Activated CD4-positive, alpha-beta T cell treated with anti-CD3 and anti-CD28 coated beads for 36 hours (primary cell): ENCODE measurements at regions of chr17 and their contacts with region 1.

Region 1: DNA sequence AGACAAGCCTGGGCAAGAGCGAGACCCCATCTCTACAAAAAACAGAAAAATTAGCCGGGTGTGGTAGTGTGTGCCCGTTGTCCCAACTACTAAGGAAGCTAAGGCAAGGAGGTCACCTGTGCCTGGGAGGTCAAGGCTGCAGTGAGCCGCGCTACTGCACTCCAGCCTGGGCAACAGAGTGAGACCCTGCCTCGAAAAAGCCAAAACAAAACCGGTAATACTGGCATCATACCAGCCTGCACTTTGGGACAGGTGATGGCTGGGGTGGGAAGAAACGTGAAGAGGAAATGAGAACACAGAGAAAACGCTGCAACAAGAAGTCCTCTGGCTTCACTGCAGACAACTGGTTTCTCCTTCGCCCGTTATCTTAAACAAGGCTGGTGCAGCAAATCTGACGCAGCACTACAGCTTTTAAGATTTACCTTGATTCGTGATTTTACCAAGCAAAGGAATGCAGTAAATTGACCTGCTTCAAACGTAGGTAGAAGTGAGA is 725 bp upstream of the CASC3 start:
- DNase-seq: no peak
- ATAC-seq: peak; percentile 5
- H3K4me3 Mint-ChIP-seq: peak overlapping the region; percentile 90
- H3K27ac Mint-ChIP-seq: peak overlapping the region; percentile 98
- H3K4me1 Mint-ChIP-seq: peaks cover 39% of the 10 kb centered on the region
- H3K27me3 Mint-ChIP-seq: no peaks in the 10 kb centered on the region

Region 2: DNA sequence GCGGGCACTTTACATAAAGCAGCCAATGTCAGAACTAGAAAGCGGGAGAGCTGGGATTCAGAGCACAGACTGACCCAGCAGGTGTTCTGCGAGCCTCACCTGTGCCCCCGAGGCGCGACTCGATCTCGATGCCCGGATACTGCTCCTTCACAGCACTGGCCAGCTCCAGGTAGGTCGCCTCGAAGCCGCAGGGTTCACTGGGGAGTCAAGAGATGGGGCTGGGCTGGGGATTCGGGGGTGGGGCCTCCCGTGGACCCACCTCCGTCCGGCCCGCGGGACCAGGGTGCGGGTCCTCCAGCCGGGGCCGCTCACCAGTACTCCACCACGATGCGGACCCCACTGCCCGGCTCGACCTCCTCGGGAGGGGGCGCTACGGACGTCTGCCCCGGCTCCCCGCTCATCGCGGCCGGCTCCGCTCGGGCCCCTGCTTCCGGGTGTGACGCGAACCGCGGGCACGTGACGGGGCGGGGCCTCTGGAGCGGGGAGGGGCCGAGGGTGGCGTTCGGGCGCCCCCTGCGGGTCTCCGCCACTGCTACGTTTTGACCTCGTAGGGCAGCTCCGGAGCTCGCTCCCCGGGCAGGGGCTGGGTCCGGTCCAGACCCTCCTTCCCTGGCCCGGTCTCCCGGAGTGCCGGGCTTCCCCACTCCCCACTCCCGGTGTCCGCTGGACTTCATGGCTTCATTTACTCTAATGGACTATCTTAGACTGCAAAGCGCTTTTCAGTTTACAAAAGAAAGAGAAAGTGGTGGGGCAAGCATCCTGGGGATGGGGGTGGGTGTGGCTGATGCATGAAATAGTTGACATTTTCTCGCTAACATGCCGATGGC is 409.3 kb before region 1 on chr17 and contains the start of gene MIEN1:
- CTCF ChIA-PET with region 1: interaction called, 3 read pairs
- POLR2A ChIA-PET with region 1: no interaction called
- intact Hi-C with region 1: loop called in 1 of 2 experiments (anchors 1 kb)
- DNase-seq: peak; percentile 97
- ATAC-seq: peak; percentile 92
- H3K4me3 Mint-ChIP-seq: peak within 1 kb of the TSS; percentile 90
- H3K27ac Mint-ChIP-seq: peak within 1 kb of the TSS; percentile 88
- H3K4me1 Mint-ChIP-seq: peaks cover 15% of the 10 kb centered on the region
- H3K27me3 Mint-ChIP-seq: no peaks in the 10 kb centered on the region
- total RNA-seq, gene MIEN1: 32.5 to 39.4 TPM

Region 3: DNA sequence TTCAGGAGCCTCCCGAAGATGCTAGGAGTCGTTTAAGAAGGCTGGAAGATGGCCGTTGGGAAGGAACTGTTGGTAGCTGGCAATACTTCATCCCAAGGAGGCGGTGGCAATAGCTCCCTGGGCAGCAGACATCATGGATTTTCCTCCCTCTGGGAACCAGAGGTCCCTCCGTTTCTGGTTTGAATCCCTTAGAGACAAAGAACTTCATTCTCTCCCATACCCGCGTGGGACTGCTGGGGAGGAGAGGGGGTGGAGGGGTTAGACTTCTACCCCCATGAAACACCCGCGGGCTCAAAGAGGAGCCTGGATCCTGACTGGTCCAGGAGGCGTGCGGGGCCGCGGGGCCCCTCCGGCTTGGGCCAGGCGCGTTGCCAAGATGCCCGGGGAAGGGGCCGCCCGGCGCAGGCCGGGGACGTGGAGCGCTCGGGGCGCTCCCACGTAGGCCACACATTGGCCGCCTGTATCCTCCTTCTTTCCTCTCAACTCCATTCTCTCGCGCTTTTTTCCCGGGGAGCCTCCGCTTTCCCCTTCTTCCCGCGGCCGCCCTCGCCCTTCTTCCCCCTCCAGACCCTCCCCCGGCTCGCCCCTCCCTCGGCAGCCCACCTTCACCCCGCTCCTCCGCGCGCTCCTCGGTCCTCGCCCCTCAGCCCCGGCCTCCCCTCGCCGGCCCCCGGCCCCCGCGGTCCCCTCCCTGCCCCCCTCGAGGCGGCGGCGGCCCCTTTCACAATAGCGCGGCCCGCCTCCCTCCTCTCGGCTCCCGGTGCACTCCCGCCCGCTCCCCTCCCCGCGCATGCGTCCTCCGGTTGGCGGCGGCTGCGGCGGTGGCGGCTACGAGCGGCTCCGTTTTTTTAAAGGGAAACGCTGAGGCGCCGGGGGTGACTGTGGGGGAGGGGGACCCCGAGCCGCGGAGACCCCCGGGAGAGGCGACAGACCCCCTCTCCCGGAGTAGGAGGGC is 18.2 kb before region 1 on chr17 and contains the start of gene MSL1:
- CTCF ChIA-PET with region 1: interaction called, 9 read pairs
- POLR2A ChIA-PET with region 1: interaction called, 22 read pairs
- intact Hi-C with region 1: loop called (anchors 1 to 2 kb)
- DNase-seq: peak; percentile 92
- ATAC-seq: peak; percentile 69
- H3K4me3 Mint-ChIP-seq: peak within 1 kb of the TSS; percentile 79
- H3K27ac Mint-ChIP-seq: peak within 1 kb of the TSS; percentile 57
- H3K4me1 Mint-ChIP-seq: peaks cover 29% of the 10 kb centered on the region
- H3K27me3 Mint-ChIP-seq: no peaks in the 10 kb centered on the region
- total RNA-seq, gene MSL1: 81.7 to 89.6 TPM

Region 4: DNA sequence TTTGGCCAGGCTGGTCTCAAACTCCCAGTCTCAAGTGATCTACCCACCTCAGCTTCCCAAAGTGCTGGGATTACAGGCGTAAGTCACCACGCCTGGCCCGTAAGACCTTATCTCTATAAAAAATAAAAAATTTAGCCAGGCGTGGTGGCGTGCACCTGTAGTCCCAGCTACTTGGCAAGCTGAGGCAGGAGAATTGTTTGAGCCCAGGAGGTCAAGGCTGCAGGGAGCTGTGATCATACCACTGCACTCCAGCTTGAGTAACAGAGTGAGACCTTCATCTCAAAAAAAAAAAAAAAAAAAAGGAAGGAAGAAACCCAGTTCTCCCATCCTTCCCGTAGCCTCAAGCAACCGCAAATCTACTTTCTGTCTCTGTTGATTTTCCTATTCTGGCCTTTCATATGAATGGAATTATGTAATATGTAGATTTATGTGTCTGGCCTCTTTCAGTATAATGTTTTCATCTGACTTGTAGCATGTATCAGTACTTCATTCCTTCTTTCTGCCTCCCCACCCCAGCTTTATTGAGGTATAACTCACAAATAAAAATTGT is 11.9 kb after region 1 on chr17:
- CTCF ChIA-PET with region 1: no interaction called
- POLR2A ChIA-PET with region 1: interaction called, 35 read pairs
- intact Hi-C with region 1: loop called in 1 of 2 experiments (anchors 1 kb)
- DNase-seq: no peak
- ATAC-seq: no peak
- H3K4me3 Mint-ChIP-seq: no peak overlapping the region
- H3K27ac Mint-ChIP-seq: peak overlapping the region; percentile 68
- H3K4me1 Mint-ChIP-seq: peaks cover 64% of the 10 kb centered on the region
- H3K27me3 Mint-ChIP-seq: no peaks in the 10 kb centered on the region

Region 5: GRCh38 chr17:40157973-40158372 is 18.4 kb after region 1 on chr17:
- CTCF ChIA-PET with region 1: interaction called, 3 read pairs
- POLR2A ChIA-PET with region 1: interaction called, 35 read pairs
- intact Hi-C with region 1: loop called in 1 of 2 experiments (anchors 1 kb)
- DNase-seq: no peak
- ATAC-seq: no peak
- H3K4me3 Mint-ChIP-seq: no peak overlapping the region
- H3K27ac Mint-ChIP-seq: peak overlapping the region; percentile 24
- H3K4me1 Mint-ChIP-seq: peaks cover 35% of the 10 kb centered on the region
- H3K27me3 Mint-ChIP-seq: no peaks in the 10 kb centered on the region

Region 6: GRCh38 chr17:40177275-40177874 is 37.8 kb after region 1 on chr17 and contains the start of gene RAPGEFL1:
- CTCF ChIA-PET with region 1: no interaction called
- POLR2A ChIA-PET with region 1: no interaction called
- intact Hi-C with region 1: loop called in 1 of 2 experiments (anchors 1 kb)
- DNase-seq: peak; percentile 95
- ATAC-seq: peak; percentile 97
- H3K4me3 Mint-ChIP-seq: peak within 1 kb of the TSS; percentile 53
- H3K27ac Mint-ChIP-seq: no peak within 1 kb of the TSS
- H3K4me1 Mint-ChIP-seq: peaks cover 8% of the 10 kb centered on the region
- H3K27me3 Mint-ChIP-seq: no peaks in the 10 kb centered on the region
- total RNA-seq, gene RAPGEFL1: 5.1 to 6.2 TPM

Region 7: DNA sequence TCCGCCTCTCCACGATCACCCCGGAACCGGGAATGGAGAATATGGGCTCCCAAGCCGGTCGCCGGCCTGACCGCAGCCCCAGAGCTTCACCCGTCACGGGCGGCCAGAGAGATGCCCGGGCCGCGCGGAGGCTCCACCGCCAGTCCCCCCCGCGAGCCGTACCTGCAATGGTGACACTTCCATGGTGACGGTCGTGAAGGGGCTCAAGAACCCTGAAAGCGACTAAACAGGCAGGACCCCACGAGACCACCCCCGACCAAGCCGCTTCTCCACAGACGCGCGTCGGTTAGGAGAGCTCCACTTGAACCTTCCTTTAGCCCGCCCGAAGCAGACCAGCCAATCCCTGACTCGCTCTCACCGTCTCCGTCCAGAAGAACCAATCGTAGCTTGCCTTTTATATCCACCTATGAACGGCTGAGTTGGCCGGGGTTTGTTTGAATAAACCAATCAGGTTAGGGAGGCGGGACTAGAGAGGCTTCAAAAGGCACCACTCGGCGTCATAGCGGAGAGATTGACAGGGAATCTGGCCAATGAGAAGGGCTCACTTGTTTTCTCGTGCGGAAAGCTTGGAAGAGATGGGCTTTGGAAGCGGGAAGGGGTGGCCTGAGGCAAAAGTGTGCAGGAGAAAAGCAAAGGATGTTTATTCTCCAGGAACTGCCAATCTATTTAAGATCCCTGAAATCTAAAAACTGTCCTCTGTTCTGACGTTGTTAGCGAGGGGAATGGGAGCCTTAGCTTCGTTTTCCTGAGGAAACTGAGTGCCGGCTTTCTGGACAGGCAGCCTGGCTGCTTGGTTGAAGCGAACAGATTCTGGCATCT is 278.2 kb after region 1 on chr17 and contains the start of gene TOP2A:
- CTCF ChIA-PET with region 1: no interaction called
- POLR2A ChIA-PET with region 1: interaction called, 3 read pairs
- intact Hi-C with region 1: loop called in 1 of 2 experiments (anchors 1 kb)
- DNase-seq: peak; percentile 95
- ATAC-seq: peak; percentile 99
- H3K4me3 Mint-ChIP-seq: peak within 1 kb of the TSS; percentile 86
- H3K27ac Mint-ChIP-seq: peak within 1 kb of the TSS; percentile 89
- H3K4me1 Mint-ChIP-seq: peaks cover 24% of the 10 kb centered on the region
- H3K27me3 Mint-ChIP-seq: no peaks in the 10 kb centered on the region
- total RNA-seq, gene TOP2A: 245 to 322 TPM